GM12878 (cell line): ENCODE measurements at regions of chr19 and their contacts with region 1.

Region 1: GRCh38 chr19:17215125-17215971 is at the start of gene USE1:
- DNase-seq: peak; percentile 63
- ATAC-seq: peak; percentile 98
- H3K4me3 ChIP-seq: peak within 1 kb of the TSS; percentile 67
- H3K27ac ChIP-seq: peak within 1 kb of the TSS; percentile 80
- H3K4me1 ChIP-seq: peaks cover 13% of the 10 kb centered on the region
- H3K27me3 ChIP-seq: no peaks in the 10 kb centered on the region
- CTCF ChIP-seq: no peak
- EP300 ChIP-seq: no peak
- POLR2A ChIP-seq: peak; percentile 97
- RAD21 ChIP-seq: no peak
- polyA plus RNA-seq, gene USE1: 9.7 to 15.4 TPM

Region 2: GRCh38 chr19:17226002-17226933 is 10.9 kb after region 1 on chr19 and contains the start of gene OCEL1:
- CTCF ChIA-PET with region 1: interaction called, 9 read pairs
- POLR2A ChIA-PET with region 1: interaction called, 13 read pairs
- RAD21 ChIA-PET with region 1: interaction called, 11 read pairs
- SMC1A ChIA-PET with region 1: interaction called, 8 read pairs
- in situ Hi-C with region 1: no loop called
- intact Hi-C with region 1: no loop called
- DNase-seq: peak; percentile 92
- ATAC-seq: peak; percentile 97
- H3K4me3 ChIP-seq: peak within 1 kb of the TSS; percentile 82
- H3K27ac ChIP-seq: peak within 1 kb of the TSS; percentile 70
- H3K4me1 ChIP-seq: no peaks in the 10 kb centered on the region
- H3K27me3 ChIP-seq: no peaks in the 10 kb centered on the region
- CTCF ChIP-seq: no peak
- EP300 ChIP-seq: no peak
- POLR2A ChIP-seq: peak; percentile 92
- RAD21 ChIP-seq: no peak
- polyA plus RNA-seq, gene OCEL1: 3.6 to 7.8 TPM

Region 3: GRCh38 chr19:17235618-17236377 is 20.4 kb after region 1 on chr19:
- CTCF ChIA-PET with region 1: interaction called, 5 read pairs
- POLR2A ChIA-PET with region 1: interaction called, 13 read pairs
- RAD21 ChIA-PET with region 1: interaction called, 18 read pairs
- SMC1A ChIA-PET with region 1: interaction called, 3 read pairs
- in situ Hi-C with region 1: no loop called
- intact Hi-C with region 1: no loop called
- DNase-seq: no peak
- ATAC-seq: peak; percentile 93
- H3K4me3 ChIP-seq: peak overlapping the region; percentile 89
- H3K27ac ChIP-seq: peak overlapping the region; percentile 50
- H3K4me1 ChIP-seq: 0 out of 2 replicates have a peak, but pooled peaks cover 4% of the 10 kb centered on the region
- H3K27me3 ChIP-seq: no peaks in the 10 kb centered on the region
- CTCF ChIP-seq: peak; percentile 45 to 90 (median 67); a peak in 5 of 6 replicates
- EP300 ChIP-seq: no peak
- POLR2A ChIP-seq: peak; percentile 39
- RAD21 ChIP-seq: peak; percentile 39; the same call in 1 of the 2 replicates